HEK293 (cell line): ENCODE measurements at regions of chr1 and their contacts with region 1.

Region 1: DNA sequence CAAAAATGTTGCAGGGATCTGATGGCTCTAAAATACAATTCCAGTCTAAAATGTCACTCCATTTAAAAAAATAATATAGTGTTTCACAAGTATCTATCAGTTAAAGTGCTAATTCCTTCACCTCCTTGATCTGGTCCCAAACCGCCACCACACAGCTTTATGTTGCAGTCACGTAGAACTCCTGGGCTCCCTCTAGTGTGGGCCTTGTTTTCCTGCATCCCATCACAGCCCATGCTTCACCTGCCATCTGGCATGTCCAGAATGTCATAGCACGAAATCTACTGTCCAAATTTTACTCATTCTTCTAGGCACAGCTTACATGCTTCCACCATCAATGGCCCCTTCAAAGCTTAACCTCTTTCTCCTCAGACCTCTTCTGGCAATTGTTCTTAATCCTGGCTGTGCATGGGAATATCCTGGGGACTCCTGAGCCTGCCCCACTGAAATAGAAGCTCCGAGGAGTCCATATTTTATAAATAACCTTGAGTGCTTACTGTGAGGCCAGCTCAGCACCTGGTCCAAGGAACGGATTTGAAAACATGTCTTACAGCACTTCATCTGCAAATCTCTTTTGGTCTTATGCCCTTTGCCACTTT is 15.5 kb downstream of the FYB2 start:
- H3K4me3 ChIP-seq: no peak overlapping the region
- H3K27ac ChIP-seq: no peak overlapping the region
- H3K4me1 ChIP-seq: no peaks in the 10 kb centered on the region
- CTCF ChIP-seq: no peak

Region 2: DNA sequence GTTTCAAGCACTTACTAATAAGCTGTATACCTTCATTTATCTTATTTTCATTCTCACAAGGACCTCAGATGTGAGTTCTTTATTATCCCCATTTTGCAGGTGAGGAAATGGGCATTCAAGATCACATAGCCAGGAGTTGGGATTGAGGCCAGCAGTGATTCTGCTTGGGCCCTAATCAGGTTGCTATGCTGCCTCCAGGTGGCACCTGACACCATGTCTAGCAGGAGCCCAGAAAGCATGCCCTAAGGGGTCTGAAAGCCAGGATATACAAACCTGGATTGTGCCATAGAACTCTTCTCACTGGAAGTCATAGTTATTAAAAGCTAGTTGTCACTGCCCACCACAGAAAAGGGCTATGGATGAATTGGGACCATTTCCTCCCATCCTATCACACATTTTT is 45.5 kb before region 1 on chr1:
- CTCF ChIA-PET with region 1: interaction called, 10 read pairs
- POLR2A ChIA-PET with region 1: no interaction called
- H3K4me3 ChIP-seq: no peak overlapping the region
- H3K27ac ChIP-seq: no peak overlapping the region
- H3K4me1 ChIP-seq: no peaks in the 10 kb centered on the region
- CTCF ChIP-seq: 0 out of 2 replicates have a peak, but pooled peaks have one; percentile 35

Region 3: DNA sequence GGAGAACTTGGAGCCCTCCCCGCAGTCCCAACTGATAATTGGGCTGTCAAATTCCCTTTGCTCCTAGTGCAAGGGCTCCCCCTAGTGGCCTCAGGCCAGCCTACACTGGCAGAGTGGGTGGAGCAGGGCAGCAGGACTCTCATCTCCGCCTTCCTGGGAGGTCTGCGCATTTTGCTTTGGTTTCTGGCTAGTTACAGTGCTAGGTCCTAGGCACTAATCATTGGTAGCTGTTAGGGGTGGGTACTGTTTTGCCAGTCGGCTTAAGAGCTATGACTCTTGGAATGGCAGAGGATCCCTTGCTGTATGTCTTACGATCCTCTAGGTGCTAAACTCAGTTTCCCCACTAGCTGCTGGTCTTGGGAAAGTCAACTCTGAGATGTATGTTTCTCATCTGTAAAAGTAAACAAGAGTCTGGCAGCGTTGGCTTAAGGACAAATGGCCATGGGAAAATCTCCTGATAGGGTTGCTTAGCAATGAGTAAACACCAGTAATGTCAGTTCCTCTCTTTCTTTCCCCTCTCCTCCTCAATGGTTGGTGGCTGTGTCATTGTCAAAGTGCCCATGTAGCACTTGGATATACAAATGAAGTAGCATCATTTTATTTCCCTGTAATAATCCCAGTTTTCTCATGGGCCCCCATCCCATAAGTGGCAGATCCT is 17.6 kb after region 1 on chr1:
- CTCF ChIA-PET with region 1: interaction called, 28 read pairs
- POLR2A ChIA-PET with region 1: interaction called, 3 read pairs
- H3K4me3 ChIP-seq: no peak overlapping the region
- H3K27ac ChIP-seq: no peak overlapping the region
- H3K4me1 ChIP-seq: no peaks in the 10 kb centered on the region
- CTCF ChIP-seq: peak; percentile 61; the same call in 1 of the 2 replicates

Region 4: GRCh38 chr1:56931686-56932085 is 128.0 kb after region 1 on chr1:
- CTCF ChIA-PET with region 1: no interaction called
- POLR2A ChIA-PET with region 1: no interaction called
- H3K4me3 ChIP-seq: no peak overlapping the region
- H3K27ac ChIP-seq: no peak overlapping the region
- H3K4me1 ChIP-seq: no peaks in the 10 kb centered on the region
- CTCF ChIP-seq: no peak